GM12878 (cell line): ENCODE measurements at regions of chr14 and their contacts with region 1.

Region 1: GRCh38 chr14:75577729-75578101 is 705 bp upstream of the FLVCR2 start:
- DNase-seq: peak; percentile 34
- ATAC-seq: peak; percentile 97
- H3K4me3 ChIP-seq: peak overlapping the region; percentile 74
- H3K27ac ChIP-seq: peak overlapping the region; percentile 40; the same call in 1 of the 2 replicates
- H3K4me1 ChIP-seq: peaks cover 7% of the 10 kb centered on the region; the same call in 1 of the 2 replicates
- H3K27me3 ChIP-seq: no peaks in the 10 kb centered on the region
- CTCF ChIP-seq: peak; percentile 76 to 84 (median 81)
- EP300 ChIP-seq: no peak
- POLR2A ChIP-seq: no peak
- RAD21 ChIP-seq: peak; percentile 78

Region 2: DNA sequence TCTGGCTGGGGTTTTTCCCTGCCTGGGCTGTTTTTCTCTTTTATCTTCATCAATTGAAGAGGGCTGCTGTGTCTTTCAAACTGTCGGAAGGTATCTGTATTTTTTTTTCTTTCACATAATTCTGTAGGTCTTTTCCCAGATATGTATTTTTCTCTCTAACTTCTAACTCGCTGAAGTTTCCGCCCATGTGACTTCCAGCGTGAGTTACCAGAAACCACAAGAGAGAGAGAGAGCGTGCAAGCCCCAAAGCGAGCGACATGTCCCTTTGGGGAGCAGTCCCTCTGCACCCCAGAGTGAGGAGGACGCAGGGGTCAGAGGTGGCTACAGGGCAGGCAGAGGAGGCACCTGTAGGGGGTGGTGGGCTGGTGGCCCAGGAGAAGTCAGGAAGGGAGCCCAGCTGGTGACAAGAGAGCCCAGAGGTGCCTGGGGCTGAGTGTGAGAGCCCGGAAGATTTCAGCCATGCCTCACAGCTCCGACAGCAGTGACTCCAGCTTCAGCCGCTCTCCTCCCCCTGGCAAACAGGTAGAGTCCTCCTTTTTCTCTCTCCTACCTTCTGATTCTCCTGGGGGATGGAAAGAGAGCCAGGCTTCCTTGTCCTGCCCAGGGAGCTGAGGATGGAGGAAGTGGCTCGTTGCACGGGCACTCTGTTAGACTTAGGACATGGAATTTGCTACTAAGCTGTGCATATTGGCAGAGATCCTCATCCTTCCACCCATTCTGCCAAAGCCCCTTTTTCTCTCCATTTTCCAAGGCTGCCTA is 55.3 kb before region 1 on chr14 and contains the start of gene BATF:
- CTCF ChIA-PET with region 1: interaction called, 154 read pairs
- POLR2A ChIA-PET with region 1: interaction called, 9 read pairs
- RAD21 ChIA-PET with region 1: interaction called, 28 read pairs
- SMC1A ChIA-PET with region 1: interaction called, 52 read pairs
- in situ Hi-C with region 1: no loop called
- intact Hi-C with region 1: no loop called
- DNase-seq: no peak
- ATAC-seq: peak; percentile 58
- H3K4me3 ChIP-seq: peak within 1 kb of the TSS; percentile 95
- H3K27ac ChIP-seq: peak within 1 kb of the TSS; percentile 93
- H3K4me1 ChIP-seq: peaks cover 29% of the 10 kb centered on the region
- H3K27me3 ChIP-seq: no peaks in the 10 kb centered on the region
- CTCF ChIP-seq: no peak
- EP300 ChIP-seq: peak; percentile 22 to 42; a peak in 1 of 4 replicates
- POLR2A ChIP-seq: peak; percentile 98
- RAD21 ChIP-seq: peak; percentile 25; the same call in 1 of the 2 replicates
- polyA plus RNA-seq, gene BATF: 10.0 to 30.9 TPM

Region 3: DNA sequence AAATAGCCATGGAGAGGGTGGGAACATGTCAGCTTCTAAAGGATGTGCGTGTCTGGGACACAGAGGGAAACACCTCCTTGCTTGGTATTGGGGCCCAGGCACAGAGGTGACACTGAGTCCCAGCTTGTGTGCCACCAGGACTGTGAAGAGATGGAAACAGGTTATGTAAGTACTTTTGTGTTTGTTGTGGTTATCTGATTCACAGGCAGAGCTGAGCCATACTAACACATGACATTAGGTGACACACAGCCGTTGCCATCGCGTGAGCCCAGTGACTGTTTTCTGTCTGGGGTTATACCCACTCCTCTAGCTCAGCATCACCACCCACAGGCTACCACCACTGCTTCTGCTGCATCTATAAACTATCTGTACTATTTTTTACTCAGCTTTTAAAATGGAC is 11.4 kb before region 1 on chr14:
- CTCF ChIA-PET with region 1: interaction called, 61 read pairs
- POLR2A ChIA-PET with region 1: interaction called, 9 read pairs
- RAD21 ChIA-PET with region 1: interaction called, 18 read pairs
- SMC1A ChIA-PET with region 1: interaction called, 41 read pairs
- in situ Hi-C with region 1: no loop called
- intact Hi-C with region 1: no loop called
- DNase-seq: no peak
- ATAC-seq: peak; percentile 76
- H3K4me3 ChIP-seq: no peak overlapping the region
- H3K27ac ChIP-seq: no peak overlapping the region
- H3K4me1 ChIP-seq: peaks cover 25% of the 10 kb centered on the region
- H3K27me3 ChIP-seq: no peaks in the 10 kb centered on the region
- CTCF ChIP-seq: peak in 1 of 3 experiments; percentile 25; a peak in 1 of 6 replicates
- EP300 ChIP-seq: peak in 1 of 2 experiments; percentile 56; a peak in 2 of 4 replicates
- POLR2A ChIP-seq: no peak
- RAD21 ChIP-seq: no peak

Region 4: DNA sequence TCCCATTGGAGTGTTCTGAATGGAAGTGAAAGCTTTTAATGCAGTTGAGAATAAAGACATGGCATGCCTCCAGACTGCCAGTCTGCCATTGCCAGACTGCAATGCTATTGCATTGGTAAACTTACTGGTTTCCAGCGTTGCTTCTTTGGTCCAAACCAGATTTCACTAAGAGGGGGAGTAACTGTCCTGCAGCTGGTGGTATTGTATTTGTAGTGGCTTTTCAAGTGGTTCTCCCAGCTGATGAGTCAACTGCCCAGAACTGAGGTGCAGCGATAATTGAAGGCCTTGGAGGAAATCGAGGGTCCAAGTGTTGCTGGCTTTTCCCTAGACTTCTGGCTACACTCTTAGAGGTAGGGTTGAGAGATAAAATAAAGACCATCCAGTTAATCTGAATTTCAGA is 51.1 kb after region 1 on chr14:
- CTCF ChIA-PET with region 1: interaction called, 29 read pairs
- POLR2A ChIA-PET with region 1: no interaction called
- RAD21 ChIA-PET with region 1: interaction called, 19 read pairs
- SMC1A ChIA-PET with region 1: interaction called, 43 read pairs
- in situ Hi-C with region 1: no loop called
- intact Hi-C with region 1: no loop called
- DNase-seq: no peak
- ATAC-seq: no peak
- H3K4me3 ChIP-seq: no peak overlapping the region
- H3K27ac ChIP-seq: no peak overlapping the region
- H3K4me1 ChIP-seq: no peaks in the 10 kb centered on the region
- H3K27me3 ChIP-seq: no peaks in the 10 kb centered on the region
- CTCF ChIP-seq: no peak
- EP300 ChIP-seq: no peak
- POLR2A ChIP-seq: no peak
- RAD21 ChIP-seq: no peak

Region 5: DNA sequence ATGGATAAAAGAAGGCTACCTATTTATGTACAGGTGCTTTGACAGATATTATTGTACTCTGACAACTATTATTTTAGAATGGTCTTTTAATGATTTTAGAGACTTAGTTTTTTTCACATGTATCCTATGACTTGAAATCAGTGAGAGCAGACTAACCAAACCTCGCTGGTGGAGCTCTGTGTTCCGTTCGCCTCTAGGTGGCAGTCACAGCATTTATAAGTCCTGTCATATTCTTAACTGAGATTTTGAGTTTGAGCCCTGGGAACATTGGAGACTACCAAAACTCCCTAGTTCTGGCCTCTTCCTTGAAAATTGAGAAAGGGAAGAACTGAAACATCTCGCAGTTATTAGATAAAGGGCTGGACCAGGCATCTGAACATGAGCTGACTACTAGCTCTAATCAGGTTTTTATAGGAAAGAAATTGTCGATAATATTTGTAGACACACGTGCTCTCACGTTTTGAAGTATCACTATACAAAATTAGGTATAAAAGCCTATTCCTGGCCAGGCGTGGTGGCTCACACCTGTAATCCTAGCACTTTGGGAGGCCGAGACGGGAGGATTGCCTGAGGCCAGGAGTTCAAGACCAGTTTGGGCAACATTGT is 131.6 kb after region 1 on chr14:
- CTCF ChIA-PET with region 1: interaction called, 16 read pairs
- POLR2A ChIA-PET with region 1: no interaction called
- RAD21 ChIA-PET with region 1: interaction called, 28 read pairs
- SMC1A ChIA-PET with region 1: interaction called, 15 read pairs
- in situ Hi-C with region 1: no loop called
- intact Hi-C with region 1: no loop called
- DNase-seq: peak; percentile 24
- ATAC-seq: peak; percentile 84
- H3K4me3 ChIP-seq: no peak overlapping the region
- H3K27ac ChIP-seq: no peak overlapping the region
- H3K4me1 ChIP-seq: peaks cover 6% of the 10 kb centered on the region
- H3K27me3 ChIP-seq: no peaks in the 10 kb centered on the region
- CTCF ChIP-seq: peak; percentile 75 to 81 (median 81)
- EP300 ChIP-seq: no peak
- POLR2A ChIP-seq: no peak
- RAD21 ChIP-seq: peak; percentile 82